ENCODE measurements at regions of chr2 and their contacts with region 1.

Region 1: DNA sequence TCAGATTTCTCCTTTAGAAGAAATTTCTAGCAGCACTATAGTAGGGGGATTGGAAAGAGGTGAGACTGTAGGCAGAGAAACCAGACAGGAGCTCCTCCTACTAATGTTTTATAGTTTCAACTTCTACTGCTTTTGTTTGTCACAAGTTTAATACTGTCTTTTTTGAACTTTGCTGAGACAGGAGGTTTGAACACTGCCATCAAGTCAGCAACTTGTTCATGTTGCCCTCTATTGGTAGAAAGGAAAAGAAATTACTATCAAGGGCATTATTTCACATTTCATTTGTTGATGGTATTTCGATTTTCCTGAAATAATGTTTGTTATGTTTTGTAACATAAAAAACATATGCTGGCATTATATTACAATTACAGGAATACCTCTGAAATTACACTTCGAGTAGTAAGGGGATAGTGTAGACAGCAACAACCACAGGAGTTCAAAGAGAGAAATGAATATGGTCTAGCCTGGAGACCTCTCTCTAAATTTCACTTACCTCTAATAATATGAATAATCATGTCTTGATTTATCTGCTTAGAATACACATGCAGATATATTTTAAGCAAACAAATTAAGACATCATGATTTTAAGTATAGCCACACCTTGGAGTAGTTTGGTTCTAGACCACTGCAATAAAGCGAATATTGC is 12.4 kb upstream of the CCDC88A start:
- DNase-seq: peak; percentile 58
- H3K4me3 ChIP-seq: no peak overlapping the region
- H3K27ac ChIP-seq: no peak overlapping the region
- H3K4me1 ChIP-seq: peaks cover 2% of the 10 kb centered on the region
- H3K27me3 ChIP-seq: no peaks in the 10 kb centered on the region
- CTCF ChIP-seq: peak; percentile 30 to 52
- POLR2A ChIP-seq: no peak

Region 2: DNA sequence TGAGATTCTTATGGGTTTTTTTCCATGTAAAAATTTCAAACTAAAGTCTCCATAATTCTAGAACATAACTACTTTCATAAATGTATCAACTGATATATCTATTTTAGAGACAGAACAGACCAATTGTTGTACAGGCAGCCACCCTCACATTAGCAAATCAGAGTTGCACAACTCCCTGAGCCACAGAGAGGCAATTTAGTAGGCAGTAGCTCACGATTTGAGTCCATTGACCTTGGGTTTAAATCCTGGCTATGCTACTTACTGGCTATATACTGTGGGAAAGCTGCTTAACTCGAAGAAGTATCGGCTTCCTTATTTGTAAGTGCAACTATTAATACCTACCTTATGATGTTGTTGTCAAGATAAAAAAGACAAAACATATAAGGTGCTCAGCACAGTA is 179.3 kb before region 1 on chr2:
- CTCF ChIA-PET with region 1: interaction called, 13 read pairs
- POLR2A ChIA-PET with region 1: no interaction called
- dilution Hi-C with region 1: no loop called
- intact Hi-C with region 1: no loop called
- DNase-seq: no peak
- H3K4me3 ChIP-seq: no peak overlapping the region
- H3K27ac ChIP-seq: no peak overlapping the region
- H3K4me1 ChIP-seq: no peaks in the 10 kb centered on the region
- H3K27me3 ChIP-seq: no peaks in the 10 kb centered on the region
- CTCF ChIP-seq: no peak
- POLR2A ChIP-seq: no peak

Region 3: DNA sequence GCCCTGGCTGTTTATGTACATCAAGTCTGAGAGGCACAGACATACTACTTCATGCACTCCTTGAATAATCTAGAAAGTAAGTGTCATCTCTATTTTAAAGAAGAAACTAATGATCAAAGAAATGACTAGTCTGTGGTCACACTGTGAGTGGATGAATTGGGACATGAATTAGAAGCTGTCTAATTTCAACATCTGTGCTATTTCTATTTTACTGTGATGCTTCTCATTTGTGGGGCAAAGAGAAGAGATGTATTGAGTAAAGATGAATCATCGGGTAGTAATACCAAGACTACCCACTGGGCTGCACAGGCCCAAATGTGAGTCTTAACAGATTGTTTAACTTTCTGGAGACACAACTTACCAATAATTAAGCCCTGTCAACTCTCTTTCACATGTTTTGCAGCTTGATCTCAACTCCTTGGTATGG is 120.6 kb before region 1 on chr2:
- CTCF ChIA-PET with region 1: interaction called, 11 read pairs
- POLR2A ChIA-PET with region 1: no interaction called
- dilution Hi-C with region 1: no loop called
- intact Hi-C with region 1: no loop called
- DNase-seq: peak; percentile 7
- H3K4me3 ChIP-seq: no peak overlapping the region
- H3K27ac ChIP-seq: no peak overlapping the region
- H3K4me1 ChIP-seq: peaks cover 28% of the 10 kb centered on the region
- H3K27me3 ChIP-seq: no peaks in the 10 kb centered on the region
- CTCF ChIP-seq: no peak
- POLR2A ChIP-seq: no peak

Region 4: GRCh38 chr2:55357927-55358326 is 74.2 kb before region 1 on chr2:
- CTCF ChIA-PET with region 1: no interaction called
- POLR2A ChIA-PET with region 1: no interaction called
- dilution Hi-C with region 1: no loop called
- intact Hi-C with region 1: no loop called
- DNase-seq: no peak
- H3K4me3 ChIP-seq: no peak overlapping the region
- H3K27ac ChIP-seq: no peak overlapping the region
- H3K4me1 ChIP-seq: no peaks in the 10 kb centered on the region
- H3K27me3 ChIP-seq: no peaks in the 10 kb centered on the region
- CTCF ChIP-seq: no peak
- POLR2A ChIP-seq: no peak

Region 5: GRCh38 chr2:55961318-55961911 is 529.3 kb after region 1 on chr2:
- CTCF ChIA-PET with region 1: no interaction called
- POLR2A ChIA-PET with region 1: no interaction called
- dilution Hi-C with region 1: no loop called
- intact Hi-C with region 1: no loop called
- DNase-seq: peak; percentile 86
- H3K4me3 ChIP-seq: no peak overlapping the region
- H3K27ac ChIP-seq: peak overlapping the region; percentile 86
- H3K4me1 ChIP-seq: peaks cover 38% of the 10 kb centered on the region
- H3K27me3 ChIP-seq: no peaks in the 10 kb centered on the region
- CTCF ChIP-seq: peak; percentile 49 to 56
- POLR2A ChIP-seq: peak; percentile 55